AG04450 (cell line): ENCODE measurements at regions of chr2 and their contacts with region 1.

Region 1: GRCh38 chr2:173027181-173028128 is 48.2 kb upstream of the MAP3K20 start:
- DNase-seq: peak; percentile 84
- H3K4me3 ChIP-seq: no peak overlapping the region
- H3K27ac ChIP-seq: no peak overlapping the region
- H3K27me3 ChIP-seq: no peaks in the 10 kb centered on the region
- CTCF ChIP-seq: peak; percentile 89

Region 2: GRCh38 chr2:172995323-172996244 is 31.9 kb before region 1 on chr2:
- CTCF ChIA-PET with region 1: interaction called, 25 read pairs
- POLR2A ChIA-PET with region 1: no interaction called
- DNase-seq: peak; percentile 87
- H3K4me3 ChIP-seq: no peak overlapping the region
- H3K27ac ChIP-seq: peak overlapping the region; percentile 65
- H3K27me3 ChIP-seq: no peaks in the 10 kb centered on the region
- CTCF ChIP-seq: peak; percentile 58

Region 3: GRCh38 chr2:173075781-173076580 is 48.5 kb after region 1 on chr2 and contains the start of gene MAP3K20:
- CTCF ChIA-PET with region 1: interaction called, 31 read pairs
- POLR2A ChIA-PET with region 1: interaction called, 13 read pairs
- DNase-seq: no peak
- H3K4me3 ChIP-seq: peak within 1 kb of the TSS; percentile 75
- H3K27ac ChIP-seq: peak within 1 kb of the TSS; percentile 86
- H3K27me3 ChIP-seq: no peaks in the 10 kb centered on the region
- CTCF ChIP-seq: peak; percentile 48
- polyA plus RNA-seq, gene MAP3K20: 59.8 and 74.6 TPM in 2 replicates

Region 4: DNA sequence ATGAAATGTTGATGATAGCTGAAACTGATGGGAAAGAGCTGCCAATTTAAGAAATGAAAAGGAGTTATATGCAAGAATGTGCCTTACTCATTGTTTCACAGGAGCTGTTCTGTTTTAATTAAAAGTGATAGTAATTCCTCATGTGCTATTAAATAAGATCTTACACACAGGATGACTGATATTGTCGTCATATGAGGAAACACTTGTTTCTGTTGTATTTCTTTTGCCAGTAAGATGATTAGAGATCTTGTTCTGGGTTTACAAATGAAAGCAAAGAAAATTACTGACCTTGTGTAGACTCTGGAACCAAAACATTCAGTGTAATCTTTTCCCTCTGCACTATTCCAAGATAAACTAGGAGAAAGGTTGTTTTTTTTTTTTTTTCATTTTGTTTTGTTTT is 171.8 kb after region 1 on chr2:
- CTCF ChIA-PET with region 1: interaction called, 22 read pairs
- POLR2A ChIA-PET with region 1: no interaction called
- DNase-seq: no peak
- H3K4me3 ChIP-seq: no peak overlapping the region
- H3K27ac ChIP-seq: no peak overlapping the region
- H3K27me3 ChIP-seq: no peaks in the 10 kb centered on the region
- CTCF ChIP-seq: no peak

Region 5: DNA sequence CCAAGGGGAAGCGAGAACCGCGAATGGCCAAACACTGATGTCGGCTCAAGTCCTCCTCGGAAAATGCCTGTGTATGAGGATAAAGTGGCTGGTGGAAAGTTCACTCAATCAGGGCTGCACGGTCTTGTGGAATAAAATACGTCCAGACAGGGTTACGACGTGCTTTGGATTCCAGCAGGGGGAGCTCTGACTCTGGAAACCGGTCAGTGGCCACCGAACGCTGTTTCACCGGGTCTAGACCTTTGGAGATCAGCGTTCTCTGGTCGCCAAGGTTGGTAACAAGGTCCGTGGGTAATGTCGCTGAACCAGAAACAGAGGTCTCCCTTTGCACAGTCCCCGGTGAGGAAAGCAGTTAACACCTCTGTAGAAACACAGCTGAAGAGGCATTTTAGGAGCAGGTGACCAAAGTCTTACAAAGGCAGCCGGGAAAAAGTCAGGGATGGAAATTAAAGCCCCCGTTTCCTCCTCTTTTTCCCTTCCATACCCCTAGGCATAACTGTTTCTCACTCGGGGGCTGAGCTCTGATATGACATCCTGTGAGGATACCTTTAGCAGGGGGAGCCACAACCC is 375.0 kb after region 1 on chr2:
- CTCF ChIA-PET with region 1: interaction called, 20 read pairs
- POLR2A ChIA-PET with region 1: no interaction called
- DNase-seq: peak; percentile 59
- H3K4me3 ChIP-seq: peak overlapping the region; percentile 35; the same call in 1 of the 2 replicates
- H3K27ac ChIP-seq: no peak overlapping the region
- H3K27me3 ChIP-seq: peaks cover 52% of the 10 kb centered on the region
- CTCF ChIP-seq: peak; percentile 95